Transverse colon (tissue), 4 donors: ENCODE measurements at regions of chr10 and their contacts with region 1.

Region 1: DNA sequence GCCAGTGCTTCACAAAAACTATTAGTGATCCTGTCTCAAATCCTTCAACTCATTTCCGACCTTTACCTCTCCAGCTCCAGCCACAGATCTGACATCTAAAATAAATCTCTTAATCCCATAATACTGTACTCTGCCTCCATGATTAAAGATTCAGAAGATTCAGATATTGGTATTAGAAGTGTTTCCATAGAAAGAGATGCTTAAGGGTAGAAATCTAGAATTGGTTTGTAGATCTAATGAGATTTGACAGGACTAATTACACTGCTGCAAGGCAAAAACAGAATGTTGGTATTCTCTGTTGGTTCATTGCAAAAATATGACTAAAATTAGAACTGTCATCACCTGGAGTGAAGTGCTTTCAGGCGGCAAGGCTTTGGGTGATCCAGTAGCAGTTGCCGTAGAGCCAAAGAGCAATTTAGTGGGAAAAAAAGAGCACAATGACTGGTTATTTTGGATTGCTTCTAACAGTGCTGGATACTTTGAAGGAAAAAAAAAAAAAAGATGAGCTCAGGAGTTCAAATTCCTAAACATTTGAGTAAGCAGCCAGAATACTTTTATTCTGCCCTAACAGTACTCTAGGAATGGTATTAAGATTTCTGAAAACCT is 940.1 kb upstream of the SORCS1 start:
- DNase-seq: no peak
- H3K4me3 ChIP-seq: no peak overlapping the region
- H3K27ac ChIP-seq: no peak overlapping the region
- H3K4me1 ChIP-seq: no peaks in the 10 kb centered on the region
- H3K27me3 ChIP-seq: no peaks in the 10 kb centered on the region
- CTCF ChIP-seq: no peak
- EP300 ChIP-seq: no peak
- POLR2A ChIP-seq: no peak

Region 2: GRCh38 chr10:107616463-107617410 is 487.9 kb before region 1 on chr10:
- in situ Hi-C with region 1: no loop called
- intact Hi-C with region 1: loop called (anchors 5 kb)
- DNase-seq: no peak
- H3K4me3 ChIP-seq: no peak overlapping the region
- H3K27ac ChIP-seq: no peak overlapping the region
- H3K4me1 ChIP-seq: no peaks in the 10 kb centered on the region
- H3K27me3 ChIP-seq: no peaks in the 10 kb centered on the region
- CTCF ChIP-seq: no peak
- EP300 ChIP-seq: no peak
- POLR2A ChIP-seq: no peak